PC-3 (cell line): ENCODE measurements at regions of chr12 and their contacts with region 1.

Region 1: GRCh38 chr12:22850185-22850584 is 225.2 kb downstream of the ETNK1 start:
- DNase-seq: no peak
- ATAC-seq: no peak
- H3K4me3 ChIP-seq: no peak overlapping the region
- H3K27ac ChIP-seq: no peak overlapping the region
- H3K4me1 ChIP-seq: no peaks in the 10 kb centered on the region
- H3K27me3 ChIP-seq: no peaks in the 10 kb centered on the region
- CTCF ChIP-seq: no peak

Region 2: GRCh38 chr12:23040759-23041158 is 190.6 kb after region 1 on chr12:
- CTCF ChIA-PET with region 1: no interaction called
- POLR2A ChIA-PET with region 1: no interaction called
- intact Hi-C with region 1: loop called (anchors 5 kb)
- DNase-seq: no peak
- ATAC-seq: no peak
- H3K4me3 ChIP-seq: no peak overlapping the region
- H3K27ac ChIP-seq: no peak overlapping the region
- H3K4me1 ChIP-seq: no peaks in the 10 kb centered on the region
- H3K27me3 ChIP-seq: no peaks in the 10 kb centered on the region
- CTCF ChIP-seq: no peak